Activated CD4-positive, alpha-beta T cell treated with anti-CD3 and anti-CD28 coated beads, Interleukin-2, amount 10 ng/mL, durations not matched to agents 24 days and 14 days (primary cell): ENCODE measurements at regions of chr13 and their contacts with region 1.

Region 1: DNA sequence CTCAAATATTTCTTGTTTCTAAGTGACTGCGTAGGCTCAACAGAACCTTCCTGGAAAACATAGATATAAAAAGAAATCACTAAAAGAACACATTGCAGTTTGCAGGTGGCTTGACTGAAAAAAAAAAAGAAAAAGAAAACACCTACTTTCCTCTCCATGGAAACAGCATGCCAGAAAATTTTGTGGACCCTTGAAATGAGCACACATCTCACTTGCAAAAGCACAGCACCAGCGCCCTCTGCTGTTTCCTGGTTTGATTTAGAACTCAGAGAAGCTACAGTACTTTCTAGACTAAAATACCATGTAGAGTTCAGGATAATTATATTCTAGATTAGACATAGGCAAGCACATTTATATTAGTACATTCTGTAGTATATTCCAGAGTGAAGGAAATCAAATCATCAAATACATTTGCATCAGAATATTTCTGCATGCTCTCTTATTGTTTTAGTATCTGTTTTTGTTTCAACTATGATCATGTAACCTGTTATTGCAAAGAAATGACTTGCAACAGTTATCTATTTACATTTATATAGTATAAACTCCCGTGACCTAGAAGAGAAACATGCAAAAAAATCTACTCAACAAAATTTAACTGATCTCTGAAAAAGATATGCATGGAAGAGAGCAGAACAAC is 22.3 kb upstream of the XPO4 start:
- DNase-seq: peak; percentile 91
- H3K4me3 Mint-ChIP-seq: no peak overlapping the region
- H3K27ac Mint-ChIP-seq: no peak overlapping the region
- H3K4me1 Mint-ChIP-seq: no peaks in the 10 kb centered on the region
- H3K27me3 Mint-ChIP-seq: peaks cover 4% of the 10 kb centered on the region

Region 2: DNA sequence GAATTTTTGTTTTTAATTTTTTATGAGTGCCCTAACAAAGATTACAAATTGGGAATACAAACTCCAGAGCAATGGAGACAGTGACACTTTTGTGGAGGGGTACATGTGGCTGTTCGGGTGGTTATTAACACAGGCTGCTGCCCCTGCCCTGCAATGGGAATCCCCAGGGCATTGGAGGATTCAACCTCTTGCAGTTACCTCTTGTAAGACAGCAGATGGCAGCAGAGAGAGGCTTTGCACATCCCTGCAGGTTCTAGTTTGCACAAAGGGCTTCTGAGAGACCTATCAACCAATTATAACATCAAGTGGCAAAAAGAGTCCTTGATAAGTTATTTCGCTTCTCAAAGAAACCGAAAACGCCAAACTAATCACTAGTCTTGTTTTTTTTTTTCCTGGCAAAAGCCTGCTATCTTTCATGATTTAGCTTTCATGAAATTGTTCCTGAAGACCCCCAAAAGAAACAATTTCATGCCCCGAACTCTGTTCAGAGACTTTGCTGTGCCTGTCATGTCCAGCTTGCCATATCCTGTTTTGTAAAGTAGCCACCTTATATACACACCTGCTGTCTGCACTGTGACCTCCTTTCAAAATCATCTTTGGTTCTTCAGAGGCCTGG is 742.5 kb before region 1 on chr13:
- intact Hi-C with region 1: loop called (anchors 5 kb)
- DNase-seq: peak; percentile 85
- H3K4me3 Mint-ChIP-seq: no peak overlapping the region
- H3K27ac Mint-ChIP-seq: no peak overlapping the region
- H3K4me1 Mint-ChIP-seq: no peaks in the 10 kb centered on the region
- H3K27me3 Mint-ChIP-seq: peaks cover 47% of the 10 kb centered on the region

Region 3: DNA sequence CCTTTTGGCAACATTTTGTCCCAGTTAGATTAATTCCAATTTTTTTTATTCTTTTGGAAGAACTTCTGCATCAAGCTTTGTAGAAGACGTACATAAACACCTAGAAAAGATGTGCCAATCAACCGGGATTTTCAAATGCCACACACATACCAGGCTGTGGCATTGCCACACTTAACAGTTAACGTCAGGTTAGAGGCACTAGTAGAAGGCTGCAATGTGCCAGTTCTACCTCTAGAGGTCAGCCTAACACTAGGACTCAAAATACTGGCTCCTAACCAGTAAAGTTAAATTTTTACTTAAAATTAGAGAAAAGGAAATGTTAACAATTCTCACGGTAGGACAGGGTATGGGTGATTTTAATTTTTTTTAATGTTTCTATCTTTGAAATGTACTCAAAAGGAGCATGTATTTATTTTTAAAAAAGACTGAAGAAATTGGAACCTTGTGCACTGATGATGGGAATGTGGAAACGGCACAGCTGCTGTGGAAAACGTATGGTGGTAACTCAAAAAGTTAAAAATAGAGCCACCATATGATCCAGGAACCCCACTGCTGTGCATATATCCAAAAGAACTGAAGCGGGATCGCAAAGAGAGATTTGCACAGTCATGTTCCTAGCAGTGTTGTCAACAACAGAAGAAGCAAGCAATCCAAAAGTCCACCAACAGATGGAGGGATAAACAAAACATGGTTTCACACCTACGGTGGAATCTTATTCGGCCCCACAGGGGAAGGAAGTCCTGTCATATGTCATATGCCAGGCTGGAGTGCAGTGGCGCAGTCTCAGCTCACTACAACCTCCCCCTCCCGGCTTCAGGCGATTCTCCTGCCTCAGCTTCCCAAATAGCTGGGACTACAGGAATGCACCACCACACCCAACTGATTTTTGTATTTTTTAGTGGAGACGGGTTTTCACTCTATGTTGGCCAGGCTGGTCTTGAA is 429.5 kb before region 1 on chr13:
- intact Hi-C with region 1: loop called (anchors 1 kb)
- DNase-seq: peak; percentile 90
- H3K4me3 Mint-ChIP-seq: no peak overlapping the region
- H3K27ac Mint-ChIP-seq: no peak overlapping the region
- H3K4me1 Mint-ChIP-seq: no peaks in the 10 kb centered on the region
- H3K27me3 Mint-ChIP-seq: no peaks in the 10 kb centered on the region

Region 4: GRCh38 chr13:20713751-20714150 is 211.1 kb before region 1 on chr13:
- intact Hi-C with region 1: loop called (anchors 1 kb)
- DNase-seq: no peak
- H3K4me3 Mint-ChIP-seq: no peak overlapping the region
- H3K27ac Mint-ChIP-seq: no peak overlapping the region
- H3K4me1 Mint-ChIP-seq: peaks cover 8% of the 10 kb centered on the region
- H3K27me3 Mint-ChIP-seq: peaks cover 15% of the 10 kb centered on the region